Activated CD4-positive, alpha-beta T cell treated with anti-CD3 and anti-CD28 coated beads for 36 hours (primary cell): ENCODE measurements at regions of chr5 and their contacts with region 1.

Region 1: DNA sequence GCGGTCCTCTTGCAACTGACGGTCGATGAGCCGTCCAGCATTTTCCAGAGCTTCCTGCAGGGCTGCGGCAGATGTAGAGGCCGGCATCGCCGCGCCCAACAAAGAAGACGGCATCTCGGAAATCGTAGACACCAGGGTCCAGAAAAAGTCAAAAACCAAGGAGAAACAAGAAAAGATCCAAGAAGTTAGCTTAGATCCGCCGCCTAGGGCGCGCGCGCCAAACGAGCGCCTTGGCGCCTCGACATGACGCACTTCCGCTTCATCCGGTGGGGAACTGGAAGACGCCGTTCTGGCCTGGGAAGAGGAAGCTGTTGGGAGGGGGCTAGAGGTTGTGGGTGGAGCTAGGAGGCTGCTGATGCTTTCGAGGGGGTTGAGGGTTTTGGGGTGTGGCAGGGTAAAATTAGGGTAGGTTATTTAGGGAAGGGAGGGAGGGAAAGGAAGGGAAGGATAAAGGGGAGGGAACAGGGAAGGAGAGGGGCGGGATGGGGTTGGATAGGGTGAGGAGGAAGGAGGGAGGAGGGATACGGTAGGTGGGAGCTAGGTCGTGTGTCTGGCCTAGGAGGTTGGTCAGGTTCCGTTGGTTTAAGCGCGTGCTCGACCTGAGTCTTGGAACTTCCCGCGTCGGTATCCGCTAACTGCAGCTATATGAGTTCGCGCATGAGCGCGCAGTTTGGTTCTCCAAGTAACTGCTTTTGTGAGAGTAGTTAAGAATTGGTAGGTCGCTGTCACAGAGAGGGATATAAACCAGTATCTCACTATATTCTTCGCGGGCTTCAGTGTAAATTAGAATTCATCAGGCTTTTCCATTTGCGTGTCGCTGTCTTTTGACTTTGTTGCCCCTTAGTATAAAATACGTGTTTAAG is at the start of gene NUP155:
- DNase-seq: peak; percentile 95
- ATAC-seq: peak; percentile 95
- H3K4me3 Mint-ChIP-seq: peak within 1 kb of the TSS; percentile 98
- H3K27ac Mint-ChIP-seq: peak within 1 kb of the TSS; percentile 99
- H3K4me1 Mint-ChIP-seq: peaks cover 35% of the 10 kb centered on the region
- H3K27me3 Mint-ChIP-seq: no peaks in the 10 kb centered on the region
- total RNA-seq, gene NUP155: 94.9 to 113 TPM

Region 2: GRCh38 chr5:36151434-36152323 is 1219.4 kb before region 1 on chr5 and contains the starts of genes LMBRD2 and SKP2:
- CTCF ChIA-PET with region 1: no interaction called
- POLR2A ChIA-PET with region 1: no interaction called
- intact Hi-C with region 1: loop called in 1 of 2 experiments (anchors 1 kb)
- DNase-seq: peak; percentile 98
- ATAC-seq: peak; percentile 99
- H3K4me3 Mint-ChIP-seq: peak within 1 kb of the TSS; percentile 97
- H3K27ac Mint-ChIP-seq: peak within 1 kb of the TSS; percentile 91
- H3K4me1 Mint-ChIP-seq: peaks cover 55% of the 10 kb centered on the region
- H3K27me3 Mint-ChIP-seq: no peaks in the 10 kb centered on the region
- total RNA-seq, gene LMBRD2: 9.3 to 10.2 TPM
- total RNA-seq, gene SKP2: 48.0 to 56.8 TPM

Region 3: GRCh38 chr5:37248970-37249686 is 122.0 kb before region 1 on chr5 and contains the start of gene CPLANE1:
- CTCF ChIA-PET with region 1: no interaction called
- POLR2A ChIA-PET with region 1: no interaction called
- intact Hi-C with region 1: loop called in 1 of 2 experiments (anchors 1 kb)
- DNase-seq: peak; percentile 72
- ATAC-seq: peak; percentile 91
- H3K4me3 Mint-ChIP-seq: peak within 1 kb of the TSS; percentile 75
- H3K27ac Mint-ChIP-seq: peak within 1 kb of the TSS; percentile 72
- H3K4me1 Mint-ChIP-seq: peaks cover 6% of the 10 kb centered on the region
- H3K27me3 Mint-ChIP-seq: no peaks in the 10 kb centered on the region
- total RNA-seq, gene CPLANE1: 6.2 to 7.4 TPM

Region 4: GRCh38 chr5:37400501-37400900 is 29.4 kb after region 1 on chr5:
- CTCF ChIA-PET with region 1: no interaction called
- POLR2A ChIA-PET with region 1: no interaction called
- intact Hi-C with region 1: no loop called
- DNase-seq: no peak
- ATAC-seq: no peak
- H3K4me3 Mint-ChIP-seq: no peak overlapping the region
- H3K27ac Mint-ChIP-seq: no peak overlapping the region
- H3K4me1 Mint-ChIP-seq: no peaks in the 10 kb centered on the region
- H3K27me3 Mint-ChIP-seq: no peaks in the 10 kb centered on the region